ENCODE measurements at regions of chr20 and their contacts with region 1.

Region 1: DNA sequence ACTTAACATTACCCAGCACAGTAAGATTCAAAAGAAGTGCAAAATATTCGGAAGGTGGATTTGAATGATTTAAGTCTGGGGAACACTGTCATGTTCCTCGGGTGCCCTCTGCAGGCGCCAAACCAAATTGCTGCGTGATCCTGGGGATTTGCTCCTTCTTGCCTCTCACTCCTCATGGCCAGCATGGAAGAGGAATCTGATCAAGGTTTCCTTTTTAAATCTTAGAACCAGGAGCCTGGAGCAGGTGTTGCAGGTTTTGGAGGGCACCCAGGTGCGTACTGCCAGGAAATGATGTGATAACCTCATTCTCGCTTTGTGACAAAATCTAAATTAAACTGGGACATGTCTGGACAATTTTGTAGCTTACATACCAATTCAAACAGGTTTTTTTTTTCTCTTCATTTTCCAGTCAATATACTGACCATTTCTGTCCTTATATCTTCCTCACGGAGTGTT is 8.1 kb upstream of the PFDN4 start:
- DNase-seq: peak; percentile 59 to 78 (median 62)
- ATAC-seq: peak; percentile 79
- H3K4me3 ChIP-seq: no peak overlapping the region
- H3K27ac ChIP-seq: no peak overlapping the region
- H3K4me1 ChIP-seq: no peaks in the 10 kb centered on the region
- H3K27me3 ChIP-seq: peaks cover 3 to 21% of the 10 kb centered on the region in 2 experiments; a peak in 3 of 5 replicates
- CTCF ChIP-seq: peak; percentile 80 to 93 (median 92)
- EP300 ChIP-seq: no peak
- POLR2A ChIP-seq: no peak
- RAD21 ChIP-seq: peak; percentile 81 to 86

Region 2: DNA sequence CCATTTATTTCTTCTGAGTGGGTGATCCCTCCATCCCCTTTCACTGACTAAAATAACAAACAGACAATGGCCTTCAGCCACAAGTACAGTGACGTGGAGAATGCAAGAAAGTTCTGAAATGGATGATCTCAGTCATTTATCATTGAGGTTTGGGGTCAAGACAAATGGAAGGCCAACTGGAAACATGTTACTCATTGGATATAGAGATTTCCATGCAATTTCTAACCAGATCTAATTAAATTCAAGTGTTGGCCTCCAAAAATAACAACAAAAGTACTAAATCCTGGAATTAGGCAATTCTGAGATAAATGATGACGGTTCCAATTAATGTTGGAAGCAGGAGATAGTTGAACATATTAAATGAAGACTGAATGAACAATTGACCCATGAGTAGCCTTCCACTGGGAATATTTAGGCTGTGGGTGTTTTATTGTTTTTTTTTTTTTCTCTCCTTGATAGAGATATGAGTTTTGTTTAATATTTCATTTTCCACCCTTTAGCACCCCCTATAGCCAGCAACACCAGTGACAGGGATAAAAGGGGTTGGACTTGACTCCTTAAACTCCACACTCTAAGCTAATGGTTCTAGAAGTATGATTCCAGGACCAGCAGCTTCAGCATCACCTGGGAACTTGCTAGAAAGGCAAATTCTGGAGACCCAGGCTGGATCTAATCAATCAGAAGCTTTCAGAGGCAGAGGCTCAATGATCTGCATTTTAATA is 242.1 kb before region 1 on chr20:
- CTCF ChIA-PET with region 1: no interaction called
- POLR2A ChIA-PET with region 1: no interaction called
- in situ Hi-C with region 1: no loop called
- intact Hi-C with region 1: loop called (anchors 10 kb)
- DNase-seq: no peak
- ATAC-seq: peak; percentile 74
- H3K4me3 ChIP-seq: no peak overlapping the region
- H3K27ac ChIP-seq: no peak overlapping the region
- H3K4me1 ChIP-seq: no peaks in the 10 kb centered on the region
- H3K27me3 ChIP-seq: peaks cover 5 to 18% of the 10 kb centered on the region in 2 experiments; a peak in 3 of 5 replicates
- CTCF ChIP-seq: peak; percentile 7 to 38 (median 11); a peak in 3 of 6 replicates
- EP300 ChIP-seq: no peak
- POLR2A ChIP-seq: no peak
- RAD21 ChIP-seq: peak in 1 of 2 experiments; percentile 23; a peak in 1 of 4 replicates

Region 3: GRCh38 chr20:54093423-54094267 is 106.1 kb before region 1 on chr20:
- CTCF ChIA-PET with region 1: interaction called, 30 read pairs
- POLR2A ChIA-PET with region 1: no interaction called
- in situ Hi-C with region 1: no loop called
- intact Hi-C with region 1: loop called (anchors 1 kb)
- DNase-seq: no peak
- ATAC-seq: no peak
- H3K4me3 ChIP-seq: no peak overlapping the region
- H3K27ac ChIP-seq: no peak overlapping the region
- H3K4me1 ChIP-seq: no peaks in the 10 kb centered on the region
- H3K27me3 ChIP-seq: peaks cover 0 to 2% of the 10 kb centered on the region in 2 experiments; a peak in 2 of 5 replicates
- CTCF ChIP-seq: no peak
- EP300 ChIP-seq: no peak
- POLR2A ChIP-seq: no peak
- RAD21 ChIP-seq: no peak

Region 4: GRCh38 chr20:54103067-54103761 is 96.5 kb before region 1 on chr20:
- CTCF ChIA-PET with region 1: interaction called, 5 read pairs
- POLR2A ChIA-PET with region 1: interaction called, 6 read pairs
- in situ Hi-C with region 1: loop called (anchors 5 kb)
- intact Hi-C with region 1: no loop called
- DNase-seq: peak; percentile 69 to 78 (median 76)
- ATAC-seq: peak; percentile 98
- H3K4me3 ChIP-seq: no peak overlapping the region
- H3K27ac ChIP-seq: no peak overlapping the region
- H3K4me1 ChIP-seq: no peaks in the 10 kb centered on the region; a peak in 1 of 5 replicates
- H3K27me3 ChIP-seq: no peaks in the 10 kb centered on the region
- CTCF ChIP-seq: peak; percentile 83 to 87 (median 86)
- EP300 ChIP-seq: no peak
- POLR2A ChIP-seq: no peak
- RAD21 ChIP-seq: peak; percentile 42 to 51

Region 5: GRCh38 chr20:54557806-54558590 is 358.2 kb after region 1 on chr20:
- CTCF ChIA-PET with region 1: no interaction called
- POLR2A ChIA-PET with region 1: no interaction called
- in situ Hi-C with region 1: no loop called
- intact Hi-C with region 1: no loop called
- DNase-seq: no peak
- ATAC-seq: no peak
- H3K4me3 ChIP-seq: no peak overlapping the region
- H3K27ac ChIP-seq: no peak overlapping the region
- H3K4me1 ChIP-seq: no peaks in the 10 kb centered on the region
- H3K27me3 ChIP-seq: no peaks in the 10 kb centered on the region
- CTCF ChIP-seq: no peak
- EP300 ChIP-seq: no peak
- POLR2A ChIP-seq: no peak
- RAD21 ChIP-seq: no peak